ENCODE measurements at regions of chr22 and their contacts with region 1.

Region 1: GRCh38 chr22:36856121-36856791 is 4.5 kb upstream of the NCF4 start:
- DNase-seq: peak; percentile 82 to 93 (median 89)
- H3K4me3 ChIP-seq: peak overlapping the region in 6 of 59 donors; percentile 2 to 30 (median 22)
- H3K27ac ChIP-seq: no peak overlapping the region
- H3K27me3 ChIP-seq: peaks cover 0 to 5% (median 0%) of the 10 kb centered on the region in 45 donors
- CTCF ChIP-seq: peak; percentile 98 to 100 (median 100)

Region 2: DNA sequence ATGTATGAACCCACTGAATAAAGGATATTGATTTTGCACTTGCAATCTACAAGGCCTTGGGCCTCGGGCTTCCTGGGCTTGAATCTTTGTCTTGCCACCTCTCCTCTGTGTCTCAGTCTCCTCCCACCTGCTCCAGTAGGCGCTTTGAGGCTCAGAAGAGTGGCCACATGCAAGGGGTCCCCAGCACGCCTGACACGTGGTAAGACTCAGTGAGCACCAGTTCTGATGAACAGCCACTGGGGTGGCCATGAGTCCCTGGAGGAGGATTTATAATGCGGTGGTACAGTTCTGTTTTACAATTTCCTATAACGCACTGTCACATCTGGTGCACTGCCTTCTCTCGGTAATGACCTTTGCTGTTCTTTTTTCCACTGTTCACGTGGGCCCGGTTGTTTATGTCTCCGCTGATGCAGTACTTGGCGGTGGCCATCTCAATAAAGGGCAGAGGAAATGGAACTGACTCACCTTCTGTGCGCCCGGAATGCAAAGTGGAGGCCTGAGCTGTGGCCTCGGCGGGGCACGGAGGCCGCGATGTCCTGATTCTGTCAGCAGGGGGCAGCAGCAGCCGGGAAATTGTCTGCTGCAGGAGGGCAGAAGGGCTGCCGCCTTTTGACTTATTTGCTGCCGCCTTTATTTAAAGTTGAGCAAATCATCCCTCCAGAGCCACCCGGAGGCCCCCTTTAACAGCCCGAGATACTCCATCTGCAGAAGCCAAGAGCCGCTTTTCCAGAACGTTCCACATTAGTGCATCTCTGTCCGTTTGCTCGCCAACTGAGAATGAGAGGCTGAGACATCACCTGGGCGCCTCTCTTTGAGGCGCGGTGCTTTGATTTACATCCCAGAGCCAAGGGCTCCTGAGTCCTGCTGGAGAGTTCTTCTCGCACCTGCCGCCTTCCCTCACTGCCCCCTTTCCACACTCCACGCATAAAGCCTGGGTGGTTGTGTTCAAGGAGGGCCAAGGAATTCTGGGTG is 74.3 kb before region 1 on chr22:
- intact Hi-C with region 1: loop called (anchors 2 kb)
- DNase-seq: peak; percentile 61 to 85 (median 73)
- H3K4me3 ChIP-seq: peak overlapping the region in 1 of 59 donors; percentile 5
- H3K27ac ChIP-seq: peak overlapping the region in 2 of 59 donors; percentile 40 to 48
- H3K27me3 ChIP-seq: peaks cover 0 to 11% (median 0%) of the 10 kb centered on the region in 45 donors
- CTCF ChIP-seq: peak; percentile 71 to 99 (median 95)

Region 3: DNA sequence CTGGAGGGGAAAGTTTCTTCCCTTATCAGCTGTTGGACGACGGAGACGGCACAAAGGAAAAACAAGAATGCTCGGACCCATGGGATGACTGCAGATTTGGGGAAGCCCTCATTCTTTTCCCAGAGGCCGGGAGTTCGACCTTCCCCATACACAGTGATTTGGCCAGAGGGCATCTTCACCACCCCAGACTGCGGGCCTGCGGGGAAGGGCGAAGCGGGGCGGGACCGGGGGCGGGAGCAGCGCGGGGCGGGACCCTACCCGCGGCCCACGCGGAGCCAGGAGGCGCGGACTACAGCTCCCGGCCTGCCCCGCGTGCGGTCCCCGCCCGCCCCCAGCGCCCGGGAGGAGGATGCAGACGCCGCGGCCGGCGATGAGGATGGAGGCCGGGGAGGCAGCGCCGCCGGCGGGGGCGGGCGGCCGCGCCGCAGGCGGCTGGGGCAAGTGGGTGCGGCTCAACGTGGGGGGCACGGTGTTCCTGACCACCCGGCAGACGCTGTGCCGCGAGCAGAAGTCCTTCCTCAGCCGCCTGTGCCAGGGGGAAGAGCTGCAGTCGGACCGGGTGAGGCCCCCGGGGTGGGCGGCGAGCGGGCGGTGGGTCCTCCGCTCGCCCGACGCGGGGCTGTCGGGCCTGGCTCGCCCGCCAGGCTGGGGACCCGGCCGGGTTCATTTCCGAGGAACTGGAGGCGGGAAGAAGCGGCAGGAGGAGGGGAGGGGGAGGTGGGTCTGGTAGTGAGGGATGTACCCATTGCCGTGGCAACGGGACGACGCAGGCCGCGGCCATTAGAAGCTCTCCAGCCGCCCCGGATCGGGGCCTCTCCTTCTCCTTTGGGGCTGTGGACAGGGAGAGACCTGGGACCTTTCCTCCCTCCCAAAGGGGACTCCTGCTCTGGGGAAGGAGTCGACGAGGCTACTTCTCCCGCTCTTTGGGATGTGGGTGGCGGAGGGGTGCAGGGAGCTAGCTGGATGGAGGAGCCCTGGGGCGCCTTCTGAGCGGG is 195.4 kb after region 1 on chr22 and contains the start of gene KCTD17:
- intact Hi-C with region 1: no loop called
- DNase-seq: peak; percentile 45 to 88 (median 72)
- H3K4me3 ChIP-seq: peak within 1 kb of the TSS; percentile 64 to 97 (median 82)
- H3K27ac ChIP-seq: peak within 1 kb of the TSS in 44 of 59 donors; percentile 0 to 85 (median 64)
- H3K27me3 ChIP-seq: no peaks in the 10 kb centered on the region
- CTCF ChIP-seq: peak in 21 of 56 donors; percentile 7 to 47 (median 28)
- total RNA-seq, gene KCTD17: 61.1 to 128 (median 98.0) TPM

Measured in dorsolateral prefrontal cortex (tissue), 120 donors.